HEK293 (cell line): ENCODE measurements at regions of chr1 and their contacts with region 1.

Region 1: GRCh38 chr1:237386362-237387143 is 344.6 kb downstream of the RYR2 start:
- H3K4me3 ChIP-seq: no peak overlapping the region
- H3K27ac ChIP-seq: no peak overlapping the region
- H3K4me1 ChIP-seq: no peaks in the 10 kb centered on the region
- CTCF ChIP-seq: peak; percentile 75

Region 2: GRCh38 chr1:236603991-236604904 is 782.3 kb before region 1 on chr1 and contains the start of gene HEATR1:
- CTCF ChIA-PET with region 1: interaction called, 49 read pairs
- POLR2A ChIA-PET with region 1: no interaction called
- H3K4me3 ChIP-seq: peak within 1 kb of the TSS; percentile 74
- H3K27ac ChIP-seq: peak within 1 kb of the TSS; percentile 76
- H3K4me1 ChIP-seq: peaks cover 7% of the 10 kb centered on the region
- CTCF ChIP-seq: peak; percentile 61; the same call in 1 of the 2 replicates

Region 3: GRCh38 chr1:236753516-236753915 is 633.0 kb before region 1 on chr1:
- CTCF ChIA-PET with region 1: interaction called, 77 read pairs
- POLR2A ChIA-PET with region 1: no interaction called
- H3K4me3 ChIP-seq: no peak overlapping the region
- H3K27ac ChIP-seq: no peak overlapping the region
- H3K4me1 ChIP-seq: no peaks in the 10 kb centered on the region
- CTCF ChIP-seq: peak; percentile 84

Region 4: DNA sequence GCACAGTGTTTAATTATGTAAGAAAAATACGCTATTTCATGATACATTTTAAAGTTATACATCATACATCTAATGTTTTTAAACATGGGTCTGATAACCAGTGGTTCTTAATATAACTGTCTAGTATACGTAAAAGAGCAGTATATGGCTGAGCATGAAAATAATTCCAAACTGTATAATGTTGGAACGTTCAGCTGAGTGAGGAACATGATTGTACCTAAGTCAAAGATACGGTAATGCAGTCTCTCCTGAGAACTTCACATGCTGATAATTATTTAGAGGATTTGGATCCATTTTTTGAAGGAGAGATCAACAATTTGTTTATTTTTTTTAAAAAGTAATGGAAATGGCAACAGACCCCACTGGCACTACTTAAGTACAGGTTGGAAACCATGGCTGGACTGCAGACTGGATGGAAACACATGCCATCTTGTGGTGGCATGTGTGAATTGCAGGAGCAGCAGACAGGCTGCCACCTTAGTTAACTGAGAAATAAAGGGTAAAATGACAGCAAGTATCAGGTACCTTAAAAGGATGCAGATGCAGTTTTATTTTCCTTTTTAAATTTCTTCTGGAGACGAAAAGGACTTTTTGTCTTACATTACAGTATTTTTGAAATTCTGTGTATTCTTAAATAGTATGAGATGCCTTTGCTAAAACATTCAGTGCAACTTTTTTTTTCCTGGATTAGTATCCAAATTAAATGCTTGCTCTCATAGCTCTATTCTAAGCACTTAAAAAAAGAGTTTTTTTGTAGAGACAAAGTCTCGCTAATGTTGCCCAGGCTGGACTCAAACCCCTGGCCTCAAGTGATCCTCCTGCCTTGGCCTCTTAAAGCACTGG is 517.7 kb before region 1 on chr1:
- CTCF ChIA-PET with region 1: interaction called, 12 read pairs
- POLR2A ChIA-PET with region 1: no interaction called
- H3K4me3 ChIP-seq: no peak overlapping the region
- H3K27ac ChIP-seq: no peak overlapping the region
- H3K4me1 ChIP-seq: no peaks in the 10 kb centered on the region
- CTCF ChIP-seq: peak; percentile 64

Region 5: DNA sequence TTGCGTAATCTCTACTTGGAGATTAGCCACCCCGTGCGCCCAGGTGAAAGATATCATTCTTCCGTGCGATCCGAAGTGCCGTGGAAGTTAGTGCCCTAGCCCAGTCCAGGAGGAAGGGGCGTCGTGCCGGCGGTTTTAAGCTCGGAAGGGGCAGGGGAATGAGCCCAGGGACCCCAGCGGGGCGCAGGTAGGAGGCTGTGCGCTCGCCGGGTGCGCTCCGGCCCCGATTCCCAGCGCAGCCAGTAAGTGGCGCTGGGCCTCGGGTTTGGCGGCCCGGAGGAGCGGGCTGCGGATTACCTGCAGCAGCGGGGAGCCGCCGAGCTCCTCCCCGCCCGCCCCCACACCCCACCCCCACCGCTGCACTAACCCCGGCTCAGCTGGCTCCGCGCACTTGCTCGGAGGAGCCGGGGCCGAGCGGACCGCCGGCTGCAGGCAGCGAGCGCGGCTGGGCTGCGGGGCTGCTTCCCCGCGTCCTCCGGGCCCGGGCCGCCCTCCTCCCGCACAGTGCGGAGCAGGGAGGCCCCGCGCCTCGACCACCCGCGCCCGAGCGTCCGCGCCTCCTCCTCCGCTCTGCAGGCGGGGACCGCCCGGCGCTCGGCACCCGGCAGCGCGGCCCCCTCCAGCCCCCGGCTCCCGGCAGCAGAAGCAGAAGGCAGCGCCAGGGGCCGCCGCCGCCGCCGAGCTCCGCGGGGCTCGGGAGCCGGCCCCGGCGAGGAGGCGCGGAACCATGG is 344.6 kb before region 1 on chr1 and contains the start of gene RYR2:
- CTCF ChIA-PET with region 1: interaction called, 46 read pairs
- POLR2A ChIA-PET with region 1: interaction called, 17 read pairs
- H3K4me3 ChIP-seq: peak within 1 kb of the TSS; percentile 69
- H3K27ac ChIP-seq: peak within 1 kb of the TSS; percentile 74; the same call in 1 of the 2 replicates
- H3K4me1 ChIP-seq: peaks cover 28% of the 10 kb centered on the region
- CTCF ChIP-seq: peak; percentile 97

Region 6: GRCh38 chr1:237139732-237140131 is 246.8 kb before region 1 on chr1:
- CTCF ChIA-PET with region 1: no interaction called
- POLR2A ChIA-PET with region 1: no interaction called
- H3K4me3 ChIP-seq: no peak overlapping the region
- H3K27ac ChIP-seq: no peak overlapping the region
- H3K4me1 ChIP-seq: no peaks in the 10 kb centered on the region
- CTCF ChIP-seq: no peak

Region 7: DNA sequence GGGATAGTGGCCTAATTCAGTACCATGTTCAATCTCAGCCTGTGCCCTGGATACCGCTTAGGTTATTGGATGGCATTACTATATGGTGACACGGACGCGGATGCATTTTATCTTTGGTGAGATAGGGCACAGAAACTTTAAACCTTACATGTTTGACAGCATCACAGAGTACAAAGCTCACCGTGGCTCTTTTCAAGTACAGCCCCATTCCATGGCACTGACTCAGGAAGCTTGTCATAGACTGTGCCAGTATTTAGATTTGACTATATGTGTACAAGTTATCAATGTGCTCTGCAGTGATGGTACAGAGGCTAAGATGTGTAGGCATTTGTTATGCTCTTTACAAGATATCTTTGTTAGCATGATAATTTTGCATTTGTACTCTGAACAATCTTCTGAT is 175.5 kb before region 1 on chr1:
- CTCF ChIA-PET with region 1: no interaction called
- POLR2A ChIA-PET with region 1: no interaction called
- H3K4me3 ChIP-seq: no peak overlapping the region
- H3K27ac ChIP-seq: no peak overlapping the region
- H3K4me1 ChIP-seq: no peaks in the 10 kb centered on the region
- CTCF ChIP-seq: no peak

Region 8: DNA sequence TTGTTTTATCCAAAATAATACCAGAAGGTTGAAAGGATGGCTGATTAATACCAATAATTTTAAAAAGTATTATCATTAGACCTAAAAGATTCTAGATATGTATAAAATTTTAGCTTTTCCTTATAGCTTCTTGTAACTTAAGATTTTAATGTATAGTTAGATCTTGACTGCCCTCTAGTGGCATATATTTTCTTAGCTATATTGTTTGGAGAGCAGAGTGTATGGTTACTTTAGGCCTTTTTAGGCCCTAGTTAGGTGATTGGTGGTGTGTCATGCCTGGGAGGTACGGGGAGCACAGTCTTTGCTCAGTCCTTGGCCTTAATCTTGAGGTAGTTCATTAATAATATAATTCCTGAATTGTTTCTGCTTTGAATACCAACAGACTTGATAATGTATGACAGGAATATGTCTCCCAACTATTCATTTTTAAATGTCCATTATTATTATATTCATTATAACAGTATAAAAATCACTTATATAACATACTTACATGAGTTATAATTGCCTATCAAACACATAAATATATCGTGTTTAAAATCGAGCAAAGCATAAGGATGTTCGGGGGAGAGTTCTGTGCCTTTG is 175.8 kb after region 1 on chr1:
- CTCF ChIA-PET with region 1: interaction called, 34 read pairs
- POLR2A ChIA-PET with region 1: no interaction called
- H3K4me3 ChIP-seq: no peak overlapping the region
- H3K27ac ChIP-seq: no peak overlapping the region
- H3K4me1 ChIP-seq: no peaks in the 10 kb centered on the region
- CTCF ChIP-seq: peak; percentile 68; the same call in 1 of the 2 replicates